ENCODE measurements at regions of chr3 and their contacts with region 1.

Region 1: DNA sequence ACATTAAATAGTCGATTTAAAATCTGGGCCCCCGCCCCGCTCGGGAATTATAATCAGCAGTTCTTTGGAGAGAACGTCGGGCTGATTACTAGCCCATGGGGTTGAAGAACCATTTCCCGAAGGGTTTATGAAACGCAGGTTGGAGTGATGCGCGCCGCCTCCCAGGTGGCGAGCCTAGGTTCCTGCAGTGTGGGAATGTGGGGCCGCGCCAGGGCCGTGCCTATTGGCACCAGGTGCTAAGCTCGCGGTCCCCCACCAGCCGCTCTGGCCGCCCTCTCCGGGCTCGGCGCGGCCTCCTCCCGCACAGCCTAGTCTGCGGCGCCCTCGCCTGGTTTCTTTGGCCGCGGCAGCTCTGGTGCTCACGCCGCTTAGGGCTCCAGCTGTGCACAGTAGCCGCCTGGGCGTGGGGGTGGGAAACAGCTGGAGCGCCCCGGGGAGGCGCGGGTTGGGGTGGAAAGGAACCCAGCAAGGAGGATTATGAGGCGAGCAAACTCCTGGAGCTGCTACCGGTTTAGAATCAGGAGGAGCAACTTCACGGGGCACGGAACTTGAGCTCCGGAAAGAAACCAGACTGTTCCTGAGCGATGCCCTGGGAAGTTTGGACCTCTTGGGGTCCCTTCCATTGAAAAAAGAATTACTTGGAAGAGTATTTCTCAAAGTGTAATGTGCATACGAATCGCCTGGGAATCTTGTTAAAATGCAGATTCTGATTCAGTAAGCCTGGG is 5.6 kb upstream of the MECOM start:
- H3K4me3 Mint-ChIP-seq: peak overlapping the region; percentile 49
- H3K27ac Mint-ChIP-seq: no peak overlapping the region
- H3K4me1 Mint-ChIP-seq: peaks cover 31% of the 10 kb centered on the region
- H3K27me3 Mint-ChIP-seq: peaks cover 92% of the 10 kb centered on the region

Region 2: DNA sequence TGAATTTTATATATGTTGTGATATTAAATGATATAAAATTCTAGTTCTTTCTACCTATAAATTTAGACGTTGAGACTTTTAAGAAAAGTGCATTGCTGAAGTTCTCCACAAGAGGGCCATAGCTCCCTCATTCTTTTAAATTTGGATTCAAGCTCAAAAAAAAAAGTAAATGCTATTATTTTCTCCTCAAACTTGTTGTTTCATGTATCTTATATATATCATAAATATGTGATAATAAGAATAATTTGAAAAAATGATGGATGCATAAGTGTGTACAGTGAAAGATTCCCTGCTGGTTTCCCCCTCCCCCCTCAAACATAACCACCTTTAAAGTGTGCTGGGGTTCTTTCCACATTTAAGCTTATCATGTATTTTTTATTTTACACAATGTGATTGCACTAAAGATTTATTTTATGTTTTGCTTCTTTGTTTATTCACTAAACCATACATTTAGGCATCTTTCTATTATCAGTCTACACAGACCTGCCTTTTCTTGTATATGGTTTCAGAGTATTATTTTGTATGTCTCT is 804.0 kb before region 1 on chr3:
- intact Hi-C with region 1: loop called (anchors 2 kb)
- H3K4me3 Mint-ChIP-seq: no peak overlapping the region
- H3K27ac Mint-ChIP-seq: no peak overlapping the region
- H3K4me1 Mint-ChIP-seq: no peaks in the 10 kb centered on the region
- H3K27me3 Mint-ChIP-seq: no peaks in the 10 kb centered on the region

Region 3: GRCh38 chr3:169150920-169151319 is 518.2 kb before region 1 on chr3:
- intact Hi-C with region 1: loop called (anchors 2 kb)
- H3K4me3 Mint-ChIP-seq: no peak overlapping the region
- H3K27ac Mint-ChIP-seq: no peak overlapping the region
- H3K4me1 Mint-ChIP-seq: peaks cover 38% of the 10 kb centered on the region
- H3K27me3 Mint-ChIP-seq: peaks cover 47% of the 10 kb centered on the region

Measured in dendritic cell treated with granulocyte-macrophage colony-stimulating factor and Interleukin-4, amounts not matched to agents 40 ng/mL and 50 ng/mL, for 4 days (primary cell).